ENCODE measurements at regions of chr6 and their contacts with region 1.

Region 1: GRCh38 chr6:37169496-37170272 is at the start of gene PIM1:
- DNase-seq: peak; percentile 100
- H3K4me3 Mint-ChIP-seq: peak within 1 kb of the TSS; percentile 94
- H3K27ac Mint-ChIP-seq: peak within 1 kb of the TSS; percentile 98
- H3K4me1 Mint-ChIP-seq: peaks cover 36% of the 10 kb centered on the region
- H3K27me3 Mint-ChIP-seq: peaks cover 1% of the 10 kb centered on the region
- total RNA-seq, gene PIM1: 497 to 505 TPM

Region 2: DNA sequence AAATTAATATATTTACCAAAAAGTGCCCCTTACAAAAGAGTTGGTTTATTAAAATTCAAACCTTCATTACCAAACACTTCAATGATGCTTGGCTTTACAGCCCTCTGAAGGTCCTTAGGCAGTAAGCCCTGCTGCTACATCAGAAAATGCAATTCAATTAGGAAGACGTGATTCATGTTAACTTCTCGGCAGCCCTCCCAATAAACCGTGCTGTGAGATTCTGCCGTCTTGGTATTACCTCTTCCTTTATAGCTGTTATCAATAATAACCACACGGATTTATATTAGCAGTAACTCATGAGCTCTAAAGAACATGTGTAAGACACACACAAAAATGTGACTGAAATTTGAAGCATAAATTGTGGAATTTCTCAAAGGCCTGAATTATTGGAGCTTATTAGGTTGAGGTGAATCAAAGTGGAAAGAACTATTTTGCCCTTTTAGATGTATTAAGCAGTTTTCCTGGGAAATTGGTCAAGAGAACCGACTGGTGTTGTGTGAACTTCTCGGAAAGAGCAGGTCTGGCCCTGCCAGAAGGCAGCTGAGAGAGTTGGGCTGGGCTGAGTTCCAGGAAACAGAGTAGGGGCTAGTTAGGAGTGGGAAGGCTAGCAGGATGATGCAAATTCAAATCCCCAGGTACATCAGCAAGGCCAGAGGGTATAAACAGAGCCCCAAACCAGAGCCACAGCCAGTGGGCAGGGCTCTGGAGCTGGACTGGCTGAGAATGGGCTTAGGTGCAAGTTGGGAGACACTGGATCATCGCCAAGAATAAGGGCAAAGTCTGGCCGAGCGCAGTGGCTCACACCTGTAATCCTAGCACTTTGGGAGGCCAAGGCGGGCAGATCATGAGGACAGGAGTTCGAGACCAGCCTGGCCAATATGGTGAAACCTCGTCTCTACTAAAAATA is 131.1 kb before region 1 on chr6:
- CTCF ChIA-PET with region 1: interaction called, 3 read pairs
- POLR2A ChIA-PET with region 1: interaction called, 1,021 read pairs
- DNase-seq: no peak
- H3K4me3 Mint-ChIP-seq: no peak overlapping the region
- H3K27ac Mint-ChIP-seq: peak overlapping the region; percentile 33
- H3K4me1 Mint-ChIP-seq: peaks cover 54% of the 10 kb centered on the region
- H3K27me3 Mint-ChIP-seq: no peaks in the 10 kb centered on the region

Region 3: DNA sequence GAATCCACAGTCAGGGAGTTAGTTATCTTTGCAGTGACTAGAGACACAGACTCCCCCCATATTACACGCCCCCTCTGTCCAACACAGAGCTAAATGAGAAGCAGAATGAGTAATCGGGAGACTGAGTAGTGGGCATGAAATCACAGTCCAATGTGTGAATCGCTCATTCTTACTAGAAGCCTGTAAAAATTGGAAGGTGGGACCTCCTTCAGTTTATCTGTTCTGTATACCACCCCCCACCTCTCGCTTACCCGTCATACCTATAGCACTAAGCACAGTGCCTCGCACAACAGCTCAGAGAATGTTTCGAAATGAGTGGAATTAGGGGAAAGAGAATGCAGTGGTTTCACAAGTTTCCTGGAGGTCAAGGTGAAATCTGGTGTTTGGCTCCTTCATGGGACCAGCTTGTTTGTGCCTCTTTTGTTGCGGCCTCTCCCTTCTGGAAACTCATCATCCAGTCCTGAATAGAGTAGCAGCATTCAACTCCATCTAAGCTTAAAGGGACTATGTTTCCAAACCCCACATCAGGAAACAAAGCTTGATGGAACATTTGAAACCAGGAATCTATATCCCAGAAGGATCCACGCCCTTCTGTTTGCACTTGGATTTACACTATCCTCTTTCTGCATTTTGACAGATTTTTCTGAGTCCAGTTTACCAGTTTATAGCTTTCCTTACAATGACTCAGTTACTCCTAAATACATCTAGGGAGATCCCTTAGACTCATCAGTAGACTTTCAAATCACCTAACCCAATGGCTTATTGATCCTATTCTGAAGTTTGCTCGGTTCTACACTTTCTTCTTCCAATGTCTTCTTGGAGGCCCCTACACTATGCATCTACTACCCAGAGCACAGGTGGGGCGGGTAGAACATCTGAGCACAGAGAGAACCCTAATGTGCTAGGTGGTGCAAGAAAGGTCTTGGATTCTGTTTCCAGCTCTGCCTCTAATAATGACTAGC is 58.9 kb before region 1 on chr6:
- CTCF ChIA-PET with region 1: no interaction called
- POLR2A ChIA-PET with region 1: interaction called, 25 read pairs
- DNase-seq: peak; percentile 34
- H3K4me3 Mint-ChIP-seq: no peak overlapping the region
- H3K27ac Mint-ChIP-seq: peak overlapping the region; percentile 48
- H3K4me1 Mint-ChIP-seq: peaks cover 41% of the 10 kb centered on the region
- H3K27me3 Mint-ChIP-seq: peaks cover 3% of the 10 kb centered on the region

Region 4: DNA sequence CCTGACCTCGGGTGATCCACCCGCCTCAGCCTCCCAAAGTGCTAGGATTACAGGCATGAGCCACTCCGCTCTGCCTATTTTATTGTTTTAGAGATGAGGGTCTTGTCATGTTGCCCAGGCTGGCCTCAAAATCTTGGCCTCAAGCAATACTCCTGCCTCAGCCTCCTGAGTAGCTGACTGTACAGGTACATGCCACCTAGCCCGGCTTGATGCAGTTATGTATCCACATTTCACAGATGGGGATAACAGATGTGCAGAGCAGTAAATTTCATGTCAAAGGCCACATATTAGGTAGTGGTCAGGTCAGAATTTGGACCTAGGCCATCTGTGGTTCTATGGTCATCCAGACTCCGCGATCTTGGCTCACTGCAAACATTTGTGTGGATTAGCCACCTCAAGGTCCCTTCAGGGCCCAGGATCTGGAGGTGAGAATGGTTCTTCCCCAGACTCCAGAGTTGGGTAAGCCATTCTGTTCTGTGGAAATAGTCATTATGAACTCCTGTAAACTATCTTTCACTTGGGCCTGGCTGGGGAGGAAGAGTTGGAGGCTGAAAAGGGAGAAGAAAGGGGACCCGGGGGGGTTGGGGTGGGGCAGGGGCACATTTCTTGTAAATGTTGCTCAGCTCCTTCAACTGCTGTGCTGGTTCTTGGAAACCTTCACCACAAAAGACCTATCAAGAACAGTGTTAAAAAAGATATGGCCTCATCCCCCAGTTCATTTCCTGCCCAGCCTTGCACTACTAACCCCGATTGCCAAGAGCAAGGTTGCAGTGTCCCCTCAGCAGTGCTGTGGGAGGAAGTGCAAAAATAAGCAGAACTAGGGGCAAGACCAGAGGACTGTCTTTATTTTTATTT is 13.3 kb after region 1 on chr6:
- CTCF ChIA-PET with region 1: interaction called, 42 read pairs
- POLR2A ChIA-PET with region 1: interaction called, 218 read pairs
- DNase-seq: peak; percentile 84
- H3K4me3 Mint-ChIP-seq: peak overlapping the region; percentile 46
- H3K27ac Mint-ChIP-seq: peak overlapping the region; percentile 97
- H3K4me1 Mint-ChIP-seq: peaks cover 77% of the 10 kb centered on the region
- H3K27me3 Mint-ChIP-seq: no peaks in the 10 kb centered on the region

Region 5: DNA sequence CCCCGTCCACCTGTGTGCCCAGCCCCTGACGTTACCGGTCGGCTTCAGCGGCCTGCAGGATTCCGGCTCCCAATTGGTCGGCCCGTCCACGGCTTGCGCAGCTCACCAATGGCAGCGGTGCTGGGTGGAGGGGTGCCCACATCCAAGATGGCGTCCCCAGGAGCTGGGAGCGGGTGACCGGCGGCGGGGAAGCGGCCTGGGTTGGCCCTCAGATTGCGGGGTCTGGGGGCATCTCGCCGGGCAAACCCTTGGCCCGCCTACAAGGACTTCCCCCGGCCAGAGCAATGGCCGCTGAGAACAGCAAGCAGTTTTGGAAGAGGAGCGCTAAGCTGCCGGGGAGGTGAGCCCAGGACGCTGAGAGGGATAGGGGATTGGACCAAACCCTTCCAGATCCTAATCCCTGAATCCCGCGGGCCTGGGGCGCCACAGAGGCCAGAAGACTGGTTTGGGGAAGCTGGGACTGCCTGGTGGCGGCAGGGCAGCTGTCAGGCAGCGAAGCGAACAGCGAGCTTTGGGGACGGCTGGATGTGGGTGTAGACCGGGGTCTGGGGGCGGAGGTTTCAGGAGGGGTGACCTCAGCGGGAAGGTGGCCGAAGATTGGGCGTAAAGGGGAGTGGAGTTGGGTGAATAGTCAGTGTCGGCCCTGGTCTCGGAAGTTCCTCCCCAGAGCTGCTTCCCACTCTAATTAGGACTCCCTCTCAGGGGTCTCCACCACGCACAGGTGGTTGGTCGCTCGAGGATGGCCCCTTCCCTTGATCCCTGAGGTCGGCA is 88.1 kb after region 1 on chr6 and contains the starts of genes TBC1D22B and TMEM217:
- CTCF ChIA-PET with region 1: interaction called, 5 read pairs
- POLR2A ChIA-PET with region 1: interaction called, 19 read pairs
- DNase-seq: peak; percentile 97
- H3K4me3 Mint-ChIP-seq: peak within 1 kb of the TSS; percentile 83
- H3K27ac Mint-ChIP-seq: peak within 1 kb of the TSS; percentile 86
- H3K4me1 Mint-ChIP-seq: peaks cover 44% of the 10 kb centered on the region
- H3K27me3 Mint-ChIP-seq: no peaks in the 10 kb centered on the region
- total RNA-seq, gene TBC1D22B: 16.5 TPM
- total RNA-seq, gene TMEM217: 1.6 to 2.1 TPM